CD4-positive, alpha-beta T cell (primary cell): ENCODE measurements at regions of chrX and their contacts with region 1.

Region 1: DNA sequence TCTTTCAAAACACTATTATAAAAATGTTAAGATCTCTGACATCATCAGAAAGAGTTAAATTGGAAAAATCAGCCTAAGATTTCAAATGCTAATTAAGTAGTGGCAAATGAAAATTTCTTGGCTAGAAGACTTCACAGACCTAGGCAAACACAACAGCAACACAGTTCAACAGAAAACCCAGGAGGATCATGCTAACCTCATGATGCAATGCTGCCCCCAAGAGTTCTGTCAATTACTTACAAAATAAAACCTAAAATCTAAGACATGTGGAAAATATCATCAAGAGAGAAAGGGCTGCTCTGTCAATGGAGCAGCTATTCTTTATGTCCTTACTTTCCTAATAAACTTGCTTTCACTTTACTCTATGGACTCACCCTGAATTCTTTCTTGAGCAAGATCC is 21.0 kb downstream of the S100G start:
- DNase-seq: peak in 9 of 14 experiments; percentile 1 to 62 (median 9)
- ATAC-seq: no peak
- H3K4me3 ChIP-seq: no peak overlapping the region
- H3K4me3 Mint-ChIP-seq: no peak overlapping the region
- H3K27ac ChIP-seq: no peak overlapping the region
- H3K27ac Mint-ChIP-seq: no peak overlapping the region
- H3K4me1 ChIP-seq: no peaks in the 10 kb centered on the region
- H3K4me1 Mint-ChIP-seq: no peaks in the 10 kb centered on the region
- H3K27me3 ChIP-seq: no peaks in the 10 kb centered on the region
- H3K27me3 Mint-ChIP-seq: no peaks in the 10 kb centered on the region
- CTCF ChIP-seq: peak; percentile 50

Region 2: DNA sequence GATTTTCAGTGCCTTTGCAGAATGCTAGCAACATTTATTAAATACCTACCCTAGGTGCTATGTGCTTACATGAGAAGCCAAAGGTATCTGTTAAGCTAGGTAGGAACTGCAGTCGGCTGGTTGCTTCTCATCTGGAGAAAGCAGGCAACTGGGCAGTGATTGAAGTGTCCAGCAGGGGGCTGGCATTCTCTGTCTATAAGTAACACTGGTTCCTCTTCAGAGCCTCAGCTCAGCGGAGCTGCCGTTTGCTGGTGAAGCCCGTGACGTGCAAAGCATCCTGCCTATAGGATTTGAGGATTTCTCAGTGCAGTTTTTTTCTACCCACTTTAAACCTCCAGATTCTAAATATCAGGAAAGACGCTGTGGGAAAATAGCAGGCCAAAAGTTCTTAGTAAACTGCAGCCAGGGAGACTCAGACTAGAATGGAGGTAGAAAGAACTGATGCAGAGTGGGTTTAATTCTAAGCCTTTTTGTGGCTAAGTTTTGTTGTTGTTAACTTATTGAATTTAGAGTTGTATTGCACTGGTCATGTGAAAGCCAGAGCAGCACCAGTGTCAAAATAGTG is 547.7 kb before region 1 on chrX and contains the start of gene GRPR:
- CTCF ChIA-PET with region 1: no interaction called
- POLR2A ChIA-PET with region 1: no interaction called
- intact Hi-C with region 1: loop called (anchors 5 kb)
- DNase-seq: peak; percentile 25 to 74 (median 45)
- ATAC-seq: peak; percentile 88
- H3K4me3 ChIP-seq: no peak within 1 kb of the TSS
- H3K4me3 Mint-ChIP-seq: no peak within 1 kb of the TSS
- H3K27ac ChIP-seq: no peak within 1 kb of the TSS
- H3K27ac Mint-ChIP-seq: no peak within 1 kb of the TSS
- H3K4me1 ChIP-seq: no peaks in the 10 kb centered on the region
- H3K4me1 Mint-ChIP-seq: peaks cover 11% of the 10 kb centered on the region
- H3K27me3 ChIP-seq: no peaks in the 10 kb centered on the region
- H3K27me3 Mint-ChIP-seq: peaks cover 17% of the 10 kb centered on the region
- CTCF ChIP-seq: peak; percentile 54
- total RNA-seq, gene GRPR: 0.20 to 0.22 TPM

Region 3: DNA sequence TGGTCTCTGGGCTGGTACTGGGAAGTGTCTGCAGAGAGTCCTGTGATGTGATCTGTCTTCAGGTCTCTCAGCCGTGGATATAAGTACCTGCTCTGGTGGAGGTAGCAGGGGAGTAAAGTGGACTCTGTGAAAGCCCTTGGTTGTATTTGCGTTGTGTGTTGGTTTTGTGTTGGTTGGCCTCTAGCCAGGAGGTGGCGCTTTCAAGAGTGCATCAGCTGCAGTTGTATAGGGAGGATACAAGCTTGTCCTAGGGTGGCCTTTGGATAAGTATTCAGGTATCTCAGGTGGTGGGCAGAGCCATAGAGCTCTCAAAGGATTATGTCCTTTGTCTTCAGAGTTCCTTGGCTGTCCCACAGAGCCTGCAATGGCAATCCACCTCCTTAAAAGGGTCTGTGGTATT is 392.1 kb before region 1 on chrX:
- CTCF ChIA-PET with region 1: no interaction called
- POLR2A ChIA-PET with region 1: no interaction called
- intact Hi-C with region 1: loop called in 1 of 2 experiments (anchors 10 kb)
- DNase-seq: peak in 2 of 14 experiments; percentile 1 to 7
- ATAC-seq: no peak
- H3K4me3 ChIP-seq: no peak overlapping the region
- H3K4me3 Mint-ChIP-seq: no peak overlapping the region
- H3K27ac ChIP-seq: no peak overlapping the region
- H3K27ac Mint-ChIP-seq: no peak overlapping the region
- H3K4me1 ChIP-seq: no peaks in the 10 kb centered on the region
- H3K4me1 Mint-ChIP-seq: no peaks in the 10 kb centered on the region
- H3K27me3 ChIP-seq: no peaks in the 10 kb centered on the region
- H3K27me3 Mint-ChIP-seq: peaks cover 10% of the 10 kb centered on the region
- CTCF ChIP-seq: no peak

Region 4: DNA sequence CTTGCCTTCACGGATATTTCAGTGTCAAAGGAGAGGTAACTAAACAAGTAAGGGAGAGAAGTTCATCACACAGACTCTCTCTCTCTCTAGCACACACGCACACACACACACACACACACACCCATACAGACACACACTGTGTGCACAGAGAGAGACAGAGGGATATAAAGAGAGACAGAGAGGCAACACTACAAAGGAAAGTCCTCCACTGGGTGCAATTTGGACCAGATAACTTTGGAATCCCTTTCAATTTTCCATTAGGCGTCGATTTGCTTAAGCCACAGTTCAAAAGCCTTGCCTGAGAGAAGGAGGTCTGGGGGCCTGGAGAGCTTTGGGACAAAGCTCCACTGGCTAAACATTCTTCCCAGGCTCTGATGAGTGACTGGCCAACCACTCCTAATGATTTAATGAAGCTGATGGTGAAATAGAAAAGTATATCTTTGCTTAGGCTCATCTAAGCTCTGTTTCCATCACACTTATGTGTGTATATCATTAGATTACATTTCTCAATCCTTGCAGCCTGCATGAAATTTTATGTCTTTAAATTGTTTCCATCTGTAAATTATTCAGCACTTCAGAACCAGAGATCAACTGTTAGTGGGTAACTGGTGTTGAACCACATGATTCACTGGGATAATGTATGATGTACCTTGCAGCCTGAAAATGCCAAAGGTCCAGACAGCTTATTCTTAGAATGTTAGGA is 322.9 kb before region 1 on chrX:
- CTCF ChIA-PET with region 1: no interaction called
- POLR2A ChIA-PET with region 1: no interaction called
- intact Hi-C with region 1: no loop called
- DNase-seq: no peak
- ATAC-seq: no peak
- H3K4me3 ChIP-seq: no peak overlapping the region
- H3K4me3 Mint-ChIP-seq: no peak overlapping the region
- H3K27ac ChIP-seq: no peak overlapping the region
- H3K27ac Mint-ChIP-seq: no peak overlapping the region
- H3K4me1 ChIP-seq: no peaks in the 10 kb centered on the region
- H3K4me1 Mint-ChIP-seq: no peaks in the 10 kb centered on the region
- H3K27me3 ChIP-seq: no peaks in the 10 kb centered on the region
- H3K27me3 Mint-ChIP-seq: peaks cover 5% of the 10 kb centered on the region
- CTCF ChIP-seq: no peak

Region 5: GRCh38 chrX:16436348-16437188 is 234.4 kb before region 1 on chrX:
- CTCF ChIA-PET with region 1: no interaction called
- POLR2A ChIA-PET with region 1: no interaction called
- intact Hi-C with region 1: loop called in 1 of 2 experiments (anchors 2 kb)
- DNase-seq: peak; percentile 29 to 77 (median 48)
- ATAC-seq: no peak
- H3K4me3 ChIP-seq: no peak overlapping the region
- H3K4me3 Mint-ChIP-seq: no peak overlapping the region
- H3K27ac ChIP-seq: no peak overlapping the region
- H3K27ac Mint-ChIP-seq: no peak overlapping the region
- H3K4me1 ChIP-seq: peaks cover 16% of the 10 kb centered on the region
- H3K4me1 Mint-ChIP-seq: peaks cover 16% of the 10 kb centered on the region
- H3K27me3 ChIP-seq: no peaks in the 10 kb centered on the region
- H3K27me3 Mint-ChIP-seq: no peaks in the 10 kb centered on the region
- CTCF ChIP-seq: peak; percentile 61

Region 6: DNA sequence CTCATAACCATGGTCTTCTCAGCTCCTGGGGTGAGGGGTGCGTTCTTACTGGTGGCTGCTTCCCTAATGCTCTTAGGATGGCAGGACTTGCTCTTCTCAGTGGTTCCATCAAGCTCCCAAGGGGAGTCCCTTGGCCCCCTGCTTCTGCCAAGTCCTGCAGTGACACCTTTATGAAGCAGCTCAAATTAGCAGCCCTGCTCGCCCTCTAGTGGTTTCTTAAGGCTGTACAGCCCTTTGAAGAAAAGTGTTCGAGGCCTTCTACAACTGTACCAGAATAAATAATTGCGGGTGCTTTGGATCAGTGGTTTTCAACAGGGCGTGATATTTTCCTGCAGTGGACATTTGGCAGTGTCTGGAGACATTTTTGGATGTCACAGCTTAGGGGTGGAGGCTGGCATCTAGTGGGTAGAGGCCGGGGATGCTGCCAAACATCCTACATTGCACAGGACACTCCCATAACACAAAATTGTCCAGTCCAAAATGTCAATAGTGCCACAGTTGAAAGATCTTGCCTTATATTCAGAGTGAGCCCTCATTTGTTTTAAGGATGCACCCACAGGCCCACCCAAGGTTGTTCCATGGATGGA is 225.7 kb before region 1 on chrX:
- CTCF ChIA-PET with region 1: no interaction called
- POLR2A ChIA-PET with region 1: no interaction called
- intact Hi-C with region 1: loop called in 1 of 2 experiments (anchors 2 kb)
- DNase-seq: peak; percentile 1 to 61 (median 22)
- ATAC-seq: peak; percentile 55
- H3K4me3 ChIP-seq: no peak overlapping the region
- H3K4me3 Mint-ChIP-seq: no peak overlapping the region
- H3K27ac ChIP-seq: no peak overlapping the region
- H3K27ac Mint-ChIP-seq: no peak overlapping the region
- H3K4me1 ChIP-seq: peaks cover 3% of the 10 kb centered on the region
- H3K4me1 Mint-ChIP-seq: peaks cover 15% of the 10 kb centered on the region
- H3K27me3 ChIP-seq: no peaks in the 10 kb centered on the region
- H3K27me3 Mint-ChIP-seq: no peaks in the 10 kb centered on the region
- CTCF ChIP-seq: peak; percentile 65

Region 7: GRCh38 chrX:16712112-16712833 is 41.3 kb after region 1 on chrX and contains the start of gene CTPS2:
- CTCF ChIA-PET with region 1: no interaction called
- POLR2A ChIA-PET with region 1: no interaction called
- intact Hi-C with region 1: no loop called
- DNase-seq: peak; percentile 11 to 66 (median 36)
- ATAC-seq: peak; percentile 90
- H3K4me3 ChIP-seq: peak within 1 kb of the TSS; percentile 70
- H3K4me3 Mint-ChIP-seq: peak within 1 kb of the TSS; percentile 92
- H3K27ac ChIP-seq: no peak within 1 kb of the TSS
- H3K27ac Mint-ChIP-seq: peak within 1 kb of the TSS; percentile 91
- H3K4me1 ChIP-seq: peaks cover 13% of the 10 kb centered on the region
- H3K4me1 Mint-ChIP-seq: peaks cover 8% of the 10 kb centered on the region
- H3K27me3 ChIP-seq: no peaks in the 10 kb centered on the region
- H3K27me3 Mint-ChIP-seq: no peaks in the 10 kb centered on the region
- CTCF ChIP-seq: no peak
- total RNA-seq, gene CTPS2: 3.8 to 4.6 TPM

Region 8: GRCh38 chrX:16979226-16979625 is 308.2 kb after region 1 on chrX:
- CTCF ChIA-PET with region 1: no interaction called
- POLR2A ChIA-PET with region 1: no interaction called
- intact Hi-C with region 1: no loop called
- DNase-seq: no peak
- ATAC-seq: no peak
- H3K4me3 ChIP-seq: no peak overlapping the region
- H3K4me3 Mint-ChIP-seq: no peak overlapping the region
- H3K27ac ChIP-seq: no peak overlapping the region
- H3K27ac Mint-ChIP-seq: no peak overlapping the region
- H3K4me1 ChIP-seq: no peaks in the 10 kb centered on the region
- H3K4me1 Mint-ChIP-seq: peaks cover 5% of the 10 kb centered on the region
- H3K27me3 ChIP-seq: no peaks in the 10 kb centered on the region
- H3K27me3 Mint-ChIP-seq: peaks cover 7% of the 10 kb centered on the region
- CTCF ChIP-seq: no peak